ENCODE measurements at regions of chr3 and their contacts with region 1.

Region 1: GRCh38 chr3:157159762-157160657 is at the start of gene CCNL1:
- DNase-seq: peak; percentile 97
- H3K4me3 Mint-ChIP-seq: peak within 1 kb of the TSS; percentile 97
- H3K27ac Mint-ChIP-seq: peak within 1 kb of the TSS; percentile 100
- H3K4me1 Mint-ChIP-seq: peaks cover 19% of the 10 kb centered on the region
- H3K27me3 Mint-ChIP-seq: no peaks in the 10 kb centered on the region
- CTCF ChIP-seq: no peak
- total RNA-seq, gene CCNL1: 103 and 112 TPM in 2 replicates

Region 2: DNA sequence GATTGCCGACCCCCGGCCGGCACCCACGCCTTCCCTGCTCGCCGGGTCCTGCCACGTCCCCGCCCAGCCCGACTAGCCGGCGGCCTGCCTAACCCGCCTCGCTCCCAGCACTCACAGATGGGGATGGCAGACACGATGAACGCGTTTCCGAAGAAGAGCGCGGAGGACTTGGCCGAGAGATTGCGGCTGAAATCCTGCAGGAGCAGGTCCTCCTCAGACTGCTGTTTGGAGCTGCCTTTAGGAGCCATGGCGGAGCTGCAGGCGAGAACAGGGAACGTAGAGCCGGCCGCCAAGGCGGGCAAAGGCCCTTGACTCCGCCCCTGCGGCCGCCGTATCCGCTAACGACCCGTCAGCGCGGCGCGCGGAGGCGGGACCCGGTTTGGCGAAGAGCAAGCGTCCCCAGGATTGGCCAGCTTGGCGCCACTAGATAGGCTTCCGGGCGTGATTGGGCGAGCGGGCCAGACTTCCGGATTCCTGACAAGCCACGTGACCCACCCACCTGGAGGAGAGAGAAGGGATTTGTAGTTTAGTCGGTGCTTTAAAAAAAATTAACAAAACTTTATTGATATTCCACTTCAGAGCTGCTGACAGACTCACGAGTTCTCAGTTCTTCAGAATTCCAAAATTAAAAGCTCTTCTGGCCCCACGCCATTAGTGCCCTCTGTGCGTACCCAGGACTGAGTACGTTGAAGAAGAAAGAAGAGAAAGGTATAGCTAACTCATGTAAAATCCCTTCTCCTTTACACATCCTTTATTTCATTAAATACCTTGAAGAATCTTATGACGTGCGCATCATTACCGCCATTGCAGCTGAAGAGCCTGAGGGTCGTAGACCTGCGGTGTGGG is 604.9 kb before region 1 on chr3 and contains the start of gene SSR3:
- CTCF ChIA-PET with region 1: interaction called, 3 read pairs
- POLR2A ChIA-PET with region 1: interaction called, 43 read pairs
- intact Hi-C with region 1: no loop called
- DNase-seq: peak; percentile 99
- H3K4me3 Mint-ChIP-seq: peak within 1 kb of the TSS; percentile 89
- H3K27ac Mint-ChIP-seq: peak within 1 kb of the TSS; percentile 92
- H3K4me1 Mint-ChIP-seq: peaks cover 30% of the 10 kb centered on the region
- H3K27me3 Mint-ChIP-seq: no peaks in the 10 kb centered on the region
- CTCF ChIP-seq: peak; percentile 8
- total RNA-seq, gene SSR3: 447 and 568 TPM in 2 replicates

Region 3: DNA sequence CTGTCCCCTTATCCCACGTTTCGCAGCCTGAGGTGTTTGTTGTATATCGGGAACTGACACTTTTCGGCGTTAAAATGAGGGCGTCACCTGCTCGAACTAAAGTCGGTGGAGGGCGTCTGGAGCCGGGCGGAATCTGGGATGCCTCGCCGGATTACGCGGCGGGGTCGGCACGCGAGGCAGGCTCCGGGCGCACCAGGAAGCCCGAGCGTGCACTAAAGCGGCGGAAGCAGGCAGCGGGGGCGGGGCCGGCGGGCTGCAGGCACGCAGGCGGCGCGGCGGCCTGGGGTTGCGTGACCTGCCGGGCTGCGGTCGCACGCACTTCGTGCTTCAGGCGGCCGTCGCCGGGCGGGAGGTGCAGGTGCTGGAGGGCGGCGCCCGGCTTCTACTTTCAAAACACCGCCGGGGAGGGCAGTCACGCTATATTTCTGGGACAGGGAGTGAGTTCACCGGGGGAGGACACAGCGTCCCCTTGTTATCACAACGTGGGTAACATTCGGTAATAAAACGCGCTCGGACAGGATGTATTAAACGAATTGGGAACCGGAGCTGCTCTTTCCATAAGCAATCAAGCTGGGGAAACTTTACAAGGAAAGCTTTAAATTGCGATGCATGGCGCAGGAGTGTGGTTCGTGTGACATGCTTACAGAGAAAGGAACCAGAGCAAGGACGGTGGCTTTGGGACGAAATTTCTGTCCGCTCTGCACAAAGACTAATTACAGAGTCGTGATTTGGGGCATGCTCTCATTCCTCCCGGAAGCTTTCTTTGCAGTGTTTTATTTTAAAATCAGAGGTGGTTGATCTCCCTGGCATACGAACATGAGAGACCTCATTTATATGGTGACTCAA is 343.0 kb before region 1 on chr3:
- CTCF ChIA-PET with region 1: no interaction called
- POLR2A ChIA-PET with region 1: interaction called, 11 read pairs
- intact Hi-C with region 1: no loop called
- DNase-seq: peak; percentile 86
- H3K4me3 Mint-ChIP-seq: peak overlapping the region; percentile 82
- H3K27ac Mint-ChIP-seq: peak overlapping the region; percentile 95
- H3K4me1 Mint-ChIP-seq: peaks cover 41% of the 10 kb centered on the region
- H3K27me3 Mint-ChIP-seq: no peaks in the 10 kb centered on the region
- CTCF ChIP-seq: no peak

Region 4: DNA sequence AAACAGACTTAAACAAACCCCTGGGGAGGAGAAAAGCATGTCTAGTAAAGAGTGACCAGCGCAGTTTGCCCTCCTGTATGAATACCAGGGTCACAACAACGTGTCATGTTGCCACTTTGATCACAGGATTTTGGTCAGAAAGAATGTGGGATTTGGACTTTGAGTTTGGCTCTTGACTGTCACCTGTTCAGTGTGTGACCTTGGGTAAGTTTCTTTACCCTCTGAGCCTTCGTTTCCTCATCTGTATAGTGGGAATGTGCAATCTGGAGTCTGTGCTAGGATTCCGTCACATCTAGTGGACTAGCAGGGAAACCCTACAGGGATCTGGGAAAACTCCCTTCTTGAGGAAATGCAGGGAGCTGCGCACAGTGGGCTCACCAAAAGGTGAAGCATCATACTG is 63.7 kb before region 1 on chr3:
- CTCF ChIA-PET with region 1: no interaction called
- POLR2A ChIA-PET with region 1: no interaction called
- intact Hi-C with region 1: no loop called
- DNase-seq: no peak
- H3K4me3 Mint-ChIP-seq: no peak overlapping the region
- H3K27ac Mint-ChIP-seq: no peak overlapping the region
- H3K4me1 Mint-ChIP-seq: peaks cover 16% of the 10 kb centered on the region
- H3K27me3 Mint-ChIP-seq: no peaks in the 10 kb centered on the region
- CTCF ChIP-seq: no peak

Region 5: GRCh38 chr3:157130467-157131251 is 29.4 kb before region 1 on chr3:
- CTCF ChIA-PET with region 1: interaction called, 4 read pairs
- POLR2A ChIA-PET with region 1: interaction called, 36 read pairs
- intact Hi-C with region 1: no loop called
- DNase-seq: peak; percentile 80
- H3K4me3 Mint-ChIP-seq: peak overlapping the region; percentile 60
- H3K27ac Mint-ChIP-seq: peak overlapping the region; percentile 96
- H3K4me1 Mint-ChIP-seq: peaks cover 63% of the 10 kb centered on the region
- H3K27me3 Mint-ChIP-seq: no peaks in the 10 kb centered on the region
- CTCF ChIP-seq: peak; percentile 81

Region 6: GRCh38 chr3:157174649-157175498 is 14.9 kb after region 1 on chr3:
- CTCF ChIA-PET with region 1: interaction called, 29 read pairs
- POLR2A ChIA-PET with region 1: interaction called, 618 read pairs
- intact Hi-C with region 1: loop called (anchors 1 kb)
- DNase-seq: peak; percentile 99
- H3K4me3 Mint-ChIP-seq: peak overlapping the region; percentile 83
- H3K27ac Mint-ChIP-seq: peak overlapping the region; percentile 98
- H3K4me1 Mint-ChIP-seq: peaks cover 6% of the 10 kb centered on the region
- H3K27me3 Mint-ChIP-seq: no peaks in the 10 kb centered on the region
- CTCF ChIP-seq: no peak

Region 7: GRCh38 chr3:157436583-157437291 is 276.7 kb after region 1 on chr3 and contains the start of gene PTX3:
- CTCF ChIA-PET with region 1: interaction called, 5 read pairs
- POLR2A ChIA-PET with region 1: interaction called, 12 read pairs
- intact Hi-C with region 1: no loop called
- DNase-seq: peak; percentile 83
- H3K4me3 Mint-ChIP-seq: peak within 1 kb of the TSS; percentile 70
- H3K27ac Mint-ChIP-seq: no peak within 1 kb of the TSS
- H3K4me1 Mint-ChIP-seq: peaks cover 6% of the 10 kb centered on the region
- H3K27me3 Mint-ChIP-seq: no peaks in the 10 kb centered on the region
- CTCF ChIP-seq: no peak
- total RNA-seq, gene PTX3: 159 and 217 TPM in 2 replicates

Region 8: DNA sequence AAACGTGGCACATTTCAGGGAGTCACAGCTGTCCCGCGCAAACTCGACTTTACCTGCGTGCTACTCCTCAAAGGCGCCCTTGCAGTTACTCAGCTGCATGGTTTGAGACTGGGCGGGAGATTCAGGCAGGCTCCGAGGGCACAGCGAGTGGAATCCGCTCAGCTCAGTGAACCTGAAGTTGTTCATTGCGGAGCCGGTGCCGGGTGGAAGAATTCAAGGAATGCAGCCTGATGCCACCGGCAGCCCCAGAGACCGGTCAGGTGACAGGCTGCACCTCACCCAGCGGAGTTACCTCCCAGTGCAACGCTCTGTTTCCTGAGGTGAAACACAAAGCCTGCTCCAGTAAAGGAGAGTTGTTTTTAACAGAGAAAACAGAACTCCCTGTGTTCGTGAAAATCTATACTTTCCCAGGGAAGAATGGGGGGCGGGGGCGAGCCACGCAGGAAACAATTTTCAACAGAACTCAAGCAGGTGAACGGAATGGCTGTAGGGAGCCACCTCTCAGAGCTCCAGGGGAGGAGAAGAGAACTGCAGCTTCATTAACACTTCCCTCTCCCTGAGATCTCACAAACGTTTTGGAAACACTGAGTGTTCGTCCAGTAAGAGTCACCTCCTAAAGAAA is 339.4 kb after region 1 on chr3:
- CTCF ChIA-PET with region 1: no interaction called
- POLR2A ChIA-PET with region 1: interaction called, 14 read pairs
- intact Hi-C with region 1: no loop called
- DNase-seq: peak; percentile 49
- H3K4me3 Mint-ChIP-seq: peak overlapping the region; percentile 81
- H3K27ac Mint-ChIP-seq: peak overlapping the region; percentile 82
- H3K4me1 Mint-ChIP-seq: peaks cover 21% of the 10 kb centered on the region
- H3K27me3 Mint-ChIP-seq: no peaks in the 10 kb centered on the region
- CTCF ChIP-seq: no peak

Measured in MCF 10A (cell line).